Activated naive CD4-positive, alpha-beta T cell treated with anti-CD3 and anti-CD28 coated beads for 36 hours (primary cell): ENCODE measurements at regions of chr12 and their contacts with region 1.

Region 1: GRCh38 chr12:68825569-68826217 is 17.7 kb downstream of the MDM2 start:
- DNase-seq: no peak
- H3K4me3 Mint-ChIP-seq: no peak overlapping the region
- H3K27ac Mint-ChIP-seq: peak overlapping the region; percentile 20
- H3K4me1 Mint-ChIP-seq: peaks cover 43% of the 10 kb centered on the region
- H3K27me3 Mint-ChIP-seq: no peaks in the 10 kb centered on the region

Region 2: GRCh38 chr12:68745904-68746571 is 79.7 kb before region 1 on chr12 and contains the start of gene SLC35E3:
- CTCF ChIA-PET with region 1: no interaction called
- intact Hi-C with region 1: loop called (anchors 5 kb)
- DNase-seq: peak; percentile 93
- H3K4me3 Mint-ChIP-seq: peak within 1 kb of the TSS; percentile 95
- H3K27ac Mint-ChIP-seq: peak within 1 kb of the TSS; percentile 74
- H3K4me1 Mint-ChIP-seq: peaks cover 22% of the 10 kb centered on the region
- H3K27me3 Mint-ChIP-seq: no peaks in the 10 kb centered on the region
- total RNA-seq, gene SLC35E3: 2.8 to 3.1 TPM

Region 3: GRCh38 chr12:68853396-68854077 is 27.8 kb after region 1 on chr12:
- CTCF ChIA-PET with region 1: interaction called, 6 read pairs
- intact Hi-C with region 1: loop called (anchors 2 kb)
- DNase-seq: no peak
- H3K4me3 Mint-ChIP-seq: no peak overlapping the region
- H3K27ac Mint-ChIP-seq: no peak overlapping the region
- H3K4me1 Mint-ChIP-seq: peaks cover 18% of the 10 kb centered on the region
- H3K27me3 Mint-ChIP-seq: no peaks in the 10 kb centered on the region